Activated CD4-positive, alpha-beta T cell treated with anti-CD3 and anti-CD28 coated beads, Interleukin-2, amount 10 ng/mL, durations not matched to agents 24 days and 14 days (primary cell): ENCODE measurements at regions of chr19 and their contacts with region 1.

Region 1: GRCh38 chr19:8389891-8390616 is at the start of gene RAB11B:
- DNase-seq: peak; percentile 100
- H3K4me3 Mint-ChIP-seq: peak within 1 kb of the TSS; percentile 94
- H3K27ac Mint-ChIP-seq: peak within 1 kb of the TSS; percentile 97
- H3K4me1 Mint-ChIP-seq: peaks cover 14% of the 10 kb centered on the region
- H3K27me3 Mint-ChIP-seq: no peaks in the 10 kb centered on the region
- total RNA-seq, gene RAB11B: 69.4 and 74.0 TPM in 2 replicates

Region 2: GRCh38 chr19:8204961-8205360 is 185.1 kb before region 1 on chr19:
- intact Hi-C with region 1: no loop called
- DNase-seq: no peak
- H3K4me3 Mint-ChIP-seq: no peak overlapping the region
- H3K27ac Mint-ChIP-seq: no peak overlapping the region
- H3K4me1 Mint-ChIP-seq: peaks cover 14% of the 10 kb centered on the region
- H3K27me3 Mint-ChIP-seq: peaks cover 12% of the 10 kb centered on the region

Region 3: GRCh38 chr19:8307965-8308866 is 81.8 kb before region 1 on chr19 and contains the start of gene CD320:
- intact Hi-C with region 1: loop called (anchors 1 kb)
- DNase-seq: peak; percentile 97
- H3K4me3 Mint-ChIP-seq: peak within 1 kb of the TSS; percentile 98
- H3K27ac Mint-ChIP-seq: peak within 1 kb of the TSS; percentile 93
- H3K4me1 Mint-ChIP-seq: peaks cover 31% of the 10 kb centered on the region
- H3K27me3 Mint-ChIP-seq: no peaks in the 10 kb centered on the region
- total RNA-seq, gene CD320: 110 and 113 TPM in 2 replicates

Region 4: GRCh38 chr19:8321060-8321985 is 68.7 kb before region 1 on chr19 and contains the starts of genes NDUFA7 and RPS28:
- intact Hi-C with region 1: loop called (anchors 1 kb)
- DNase-seq: peak; percentile 99
- H3K4me3 Mint-ChIP-seq: peak within 1 kb of the TSS; percentile 100
- H3K27ac Mint-ChIP-seq: peak within 1 kb of the TSS; percentile 99
- H3K4me1 Mint-ChIP-seq: peaks cover 21% of the 10 kb centered on the region
- H3K27me3 Mint-ChIP-seq: no peaks in the 10 kb centered on the region
- total RNA-seq, gene NDUFA7: 52.9 and 54.3 TPM in 2 replicates
- total RNA-seq, gene RPS28: 2,054 and 2,121 TPM in 2 replicates

Region 5: DNA sequence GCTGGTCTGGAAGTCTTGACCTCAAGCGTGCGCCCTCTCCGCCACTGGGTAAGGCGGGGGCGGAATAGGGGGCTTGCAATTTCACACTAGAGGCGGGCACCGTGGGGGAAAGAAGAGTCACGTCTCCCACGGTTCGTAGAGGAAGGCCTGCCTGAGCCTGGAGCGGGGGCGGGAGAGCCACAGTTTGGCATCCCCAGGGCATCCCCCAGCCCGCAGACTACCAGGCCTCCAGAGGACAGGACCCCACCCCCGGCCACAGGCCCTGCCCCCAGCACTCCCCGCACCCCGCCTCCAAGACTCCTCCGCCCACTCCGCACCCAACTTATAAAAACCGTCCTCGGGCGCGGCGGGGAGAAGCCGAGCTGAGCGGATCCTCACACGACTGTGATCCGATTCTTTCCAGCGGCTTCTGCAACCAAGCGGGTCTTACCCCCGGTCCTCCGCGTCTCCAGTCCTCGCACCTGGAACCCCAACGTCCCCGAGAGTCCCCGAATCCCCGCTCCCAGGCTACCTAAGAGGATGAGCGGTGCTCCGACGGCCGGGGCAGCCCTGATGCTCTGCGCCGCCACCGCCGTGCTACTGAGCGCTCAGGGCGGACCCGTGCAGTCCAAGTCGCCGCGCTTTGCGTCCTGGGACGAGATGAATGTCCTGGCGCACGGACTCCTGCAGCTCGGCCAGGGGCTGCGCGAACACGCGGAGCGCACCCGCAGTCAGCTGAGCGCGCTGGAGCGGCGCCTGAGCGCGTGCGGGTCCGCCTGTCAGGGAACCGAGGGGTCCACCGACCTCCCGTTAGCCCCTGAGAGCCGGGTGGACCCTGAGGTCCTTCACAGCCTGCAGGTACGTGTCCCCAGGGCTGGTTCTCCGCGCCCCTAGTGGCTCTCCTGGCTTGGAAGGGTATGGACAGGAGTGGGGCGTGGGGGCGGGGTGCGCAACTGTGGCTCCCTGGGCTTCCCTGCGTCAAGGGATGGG is 26.0 kb before region 1 on chr19 and contains the start of gene ANGPTL4:
- intact Hi-C with region 1: loop called (anchors 1 kb)
- DNase-seq: peak; percentile 92
- H3K4me3 Mint-ChIP-seq: peak within 1 kb of the TSS; percentile 83
- H3K27ac Mint-ChIP-seq: peak within 1 kb of the TSS; percentile 64
- H3K4me1 Mint-ChIP-seq: peaks cover 22% of the 10 kb centered on the region
- H3K27me3 Mint-ChIP-seq: peaks cover 23% of the 10 kb centered on the region
- total RNA-seq, gene ANGPTL4: 4.0 and 4.1 TPM in 2 replicates

Region 6: GRCh38 chr19:8412783-8413628 is 23.0 kb after region 1 on chr19 and contains the start of gene MARCHF2:
- intact Hi-C with region 1: loop called (anchors 1 kb)
- DNase-seq: peak; percentile 99
- H3K4me3 Mint-ChIP-seq: peak within 1 kb of the TSS; percentile 52
- H3K27ac Mint-ChIP-seq: peak within 1 kb of the TSS; percentile 29
- H3K4me1 Mint-ChIP-seq: peaks cover 8% of the 10 kb centered on the region
- H3K27me3 Mint-ChIP-seq: no peaks in the 10 kb centered on the region
- total RNA-seq, gene MARCHF2: 7.9 and 8.8 TPM in 2 replicates

Region 7: DNA sequence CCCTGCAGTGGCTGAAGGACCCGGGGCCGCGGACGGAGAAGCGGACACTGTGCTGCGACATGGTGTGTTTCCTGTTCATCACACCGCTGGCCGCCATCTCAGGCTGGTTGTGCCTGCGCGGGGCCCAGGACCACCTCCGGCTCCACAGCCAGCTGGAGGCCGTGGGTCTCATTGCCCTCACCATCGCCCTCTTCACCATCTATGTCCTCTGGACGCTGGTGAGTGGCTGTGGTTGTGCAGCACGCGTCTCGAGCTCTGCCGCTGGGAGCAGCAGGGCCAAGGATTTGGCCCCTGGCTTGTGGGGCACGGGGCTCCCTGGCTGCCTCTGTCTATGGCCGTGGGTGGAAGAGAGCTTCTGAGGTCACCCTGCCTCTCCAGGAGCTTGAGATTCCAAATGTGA is 40.6 kb after region 1 on chr19:
- intact Hi-C with region 1: no loop called
- DNase-seq: no peak
- H3K4me3 Mint-ChIP-seq: no peak overlapping the region
- H3K27ac Mint-ChIP-seq: no peak overlapping the region
- H3K4me1 Mint-ChIP-seq: peaks cover 1% of the 10 kb centered on the region
- H3K27me3 Mint-ChIP-seq: no peaks in the 10 kb centered on the region

Region 8: GRCh38 chr19:8444645-8445487 is 54.8 kb after region 1 on chr19 and contains the start of gene HNRNPM:
- intact Hi-C with region 1: loop called (anchors 2 kb)
- DNase-seq: peak; percentile 100
- H3K4me3 Mint-ChIP-seq: peak within 1 kb of the TSS; percentile 96
- H3K27ac Mint-ChIP-seq: peak within 1 kb of the TSS; percentile 99
- H3K4me1 Mint-ChIP-seq: peaks cover 25% of the 10 kb centered on the region
- H3K27me3 Mint-ChIP-seq: no peaks in the 10 kb centered on the region
- total RNA-seq, gene HNRNPM: 349 and 352 TPM in 2 replicates

Region 9: DNA sequence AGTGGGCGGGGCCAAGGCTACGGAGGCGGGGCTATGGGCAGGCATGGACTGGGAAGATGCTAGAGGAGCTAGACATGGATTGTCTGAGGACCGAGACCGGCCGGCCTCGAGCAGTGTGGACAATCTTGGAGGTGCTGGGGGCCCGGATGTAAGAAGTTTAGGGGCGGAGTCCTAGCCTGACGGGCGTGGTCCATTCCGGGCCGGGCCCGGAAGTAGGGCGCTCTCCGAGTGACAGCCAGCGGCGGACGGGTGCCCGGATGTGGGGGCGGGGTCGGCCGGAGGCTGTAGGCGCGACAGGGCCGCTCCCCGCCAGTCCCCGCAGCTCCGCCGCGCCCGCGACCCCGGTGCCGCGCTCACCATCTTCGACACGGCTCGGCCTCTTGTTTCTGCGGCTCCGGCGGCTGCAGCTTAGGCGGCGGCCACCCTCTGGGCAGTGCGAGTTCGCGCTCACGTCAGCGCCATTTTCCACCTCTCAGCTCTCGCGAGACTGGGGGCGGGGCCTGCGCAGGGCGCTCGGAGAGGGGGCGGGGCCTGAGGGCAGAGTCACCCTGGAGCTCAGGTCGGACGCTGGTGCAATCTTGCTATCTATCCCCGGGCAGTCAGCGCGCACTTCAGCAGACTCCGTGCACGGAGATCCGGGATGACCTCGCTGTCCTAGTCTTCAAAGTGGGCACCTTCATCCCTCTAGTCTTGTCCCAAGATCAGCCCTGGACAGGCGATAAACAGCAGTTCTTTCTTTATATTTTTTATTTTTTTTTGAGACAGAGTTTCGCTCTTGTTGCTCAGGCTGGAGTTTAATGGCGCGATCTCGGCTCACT is 123.8 kb after region 1 on chr19 and contains the start of gene ZNF414:
- intact Hi-C with region 1: loop called (anchors 1 kb)
- DNase-seq: peak; percentile 98
- H3K4me3 Mint-ChIP-seq: peak within 1 kb of the TSS; percentile 94
- H3K27ac Mint-ChIP-seq: peak within 1 kb of the TSS; percentile 100
- H3K4me1 Mint-ChIP-seq: peaks cover 38% of the 10 kb centered on the region
- H3K27me3 Mint-ChIP-seq: no peaks in the 10 kb centered on the region
- total RNA-seq, gene ZNF414: 18.1 and 25.6 TPM in 2 replicates